K562 (cell line): ENCODE measurements at regions of chr1 and their contacts with region 1.

Region 1: DNA sequence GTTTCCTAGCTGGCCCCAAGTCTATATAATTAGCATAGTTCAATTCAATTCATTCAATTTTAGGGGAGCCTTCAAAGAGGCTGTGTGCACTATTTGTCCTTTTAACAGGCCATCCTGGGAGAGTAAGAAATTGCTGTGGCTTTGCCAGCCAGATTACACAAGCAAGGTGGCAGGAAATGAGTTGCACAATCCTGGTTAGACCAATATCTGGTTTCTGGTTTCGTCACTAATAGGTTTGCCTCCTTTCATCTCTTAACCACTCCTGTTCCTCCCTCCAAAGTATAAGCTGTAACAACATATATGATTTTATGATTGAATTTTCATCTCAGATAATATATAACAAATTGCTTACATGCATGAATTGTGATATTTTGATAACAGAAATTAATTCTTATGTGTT is 84.1 kb upstream of the NEGR1 start:
- DNase-seq: no peak
- ATAC-seq: no peak
- H3K4me3 ChIP-seq: no peak overlapping the region
- H3K27ac ChIP-seq: no peak overlapping the region
- H3K4me1 ChIP-seq: no peaks in the 10 kb centered on the region
- H3K27me3 ChIP-seq: no peaks in the 10 kb centered on the region
- CTCF ChIP-seq: no peak
- EP300 ChIP-seq: no peak
- POLR2A ChIP-seq: no peak
- RAD21 ChIP-seq: no peak

Region 2: GRCh38 chr1:72296481-72296880 is 70.0 kb before region 1 on chr1:
- CTCF ChIA-PET with region 1: no interaction called
- POLR2A ChIA-PET with region 1: no interaction called
- in situ Hi-C with region 1: loop called (anchors 5 kb)
- intact Hi-C with region 1: no loop called
- DNase-seq: no peak
- ATAC-seq: no peak
- H3K4me3 ChIP-seq: no peak overlapping the region
- H3K27ac ChIP-seq: no peak overlapping the region
- H3K4me1 ChIP-seq: no peaks in the 10 kb centered on the region
- H3K27me3 ChIP-seq: no peaks in the 10 kb centered on the region
- CTCF ChIP-seq: no peak
- EP300 ChIP-seq: no peak
- POLR2A ChIP-seq: no peak
- RAD21 ChIP-seq: no peak